ENCODE measurements at regions of chr11 and their contacts with region 1.

Region 1: GRCh38 chr11:16012125-16012751 is 344.1 kb downstream of the SOX6 start:
- DNase-seq: no peak
- ATAC-seq: no peak
- H3K4me3 ChIP-seq: no peak overlapping the region
- H3K4me3 Mint-ChIP-seq: no peak overlapping the region
- H3K27ac ChIP-seq: no peak overlapping the region
- H3K27ac Mint-ChIP-seq: no peak overlapping the region
- H3K4me1 ChIP-seq: no peaks in the 10 kb centered on the region
- H3K4me1 Mint-ChIP-seq: no peaks in the 10 kb centered on the region
- H3K27me3 ChIP-seq: no peaks in the 10 kb centered on the region
- H3K27me3 Mint-ChIP-seq: peaks cover 0 to 4% (median 0%) of the 10 kb centered on the region in 5 donors

Region 2: GRCh38 chr11:15688351-15688792 is 323.9 kb before region 1 on chr11:
- CTCF ChIA-PET with region 1: no interaction called
- POLR2A ChIA-PET with region 1: no interaction called
- intact Hi-C with region 1: loop called in 1 of 2 experiments (anchors 5 kb)
- DNase-seq: no peak
- ATAC-seq: no peak
- H3K4me3 ChIP-seq: no peak overlapping the region
- H3K4me3 Mint-ChIP-seq: no peak overlapping the region
- H3K27ac ChIP-seq: no peak overlapping the region
- H3K27ac Mint-ChIP-seq: no peak overlapping the region
- H3K4me1 ChIP-seq: no peaks in the 10 kb centered on the region
- H3K4me1 Mint-ChIP-seq: no peaks in the 10 kb centered on the region
- H3K27me3 ChIP-seq: no peaks in the 10 kb centered on the region
- H3K27me3 Mint-ChIP-seq: peaks cover 0 to 31% (median 14%) of the 10 kb centered on the region in 5 donors

Region 3: GRCh38 chr11:16043617-16044016 is 31.4 kb after region 1 on chr11:
- CTCF ChIA-PET with region 1: no interaction called
- POLR2A ChIA-PET with region 1: no interaction called
- intact Hi-C with region 1: no loop called
- DNase-seq: no peak
- ATAC-seq: no peak
- H3K4me3 ChIP-seq: no peak overlapping the region
- H3K4me3 Mint-ChIP-seq: no peak overlapping the region
- H3K27ac ChIP-seq: no peak overlapping the region
- H3K27ac Mint-ChIP-seq: no peak overlapping the region
- H3K4me1 ChIP-seq: no peaks in the 10 kb centered on the region
- H3K4me1 Mint-ChIP-seq: no peaks in the 10 kb centered on the region
- H3K27me3 ChIP-seq: no peaks in the 10 kb centered on the region
- H3K27me3 Mint-ChIP-seq: no peaks in the 10 kb centered on the region

Measured in naive thymus-derived CD4-positive, alpha-beta T cell (primary cell).